ENCODE measurements at regions of chr5 and their contacts with region 1.

Region 1: DNA sequence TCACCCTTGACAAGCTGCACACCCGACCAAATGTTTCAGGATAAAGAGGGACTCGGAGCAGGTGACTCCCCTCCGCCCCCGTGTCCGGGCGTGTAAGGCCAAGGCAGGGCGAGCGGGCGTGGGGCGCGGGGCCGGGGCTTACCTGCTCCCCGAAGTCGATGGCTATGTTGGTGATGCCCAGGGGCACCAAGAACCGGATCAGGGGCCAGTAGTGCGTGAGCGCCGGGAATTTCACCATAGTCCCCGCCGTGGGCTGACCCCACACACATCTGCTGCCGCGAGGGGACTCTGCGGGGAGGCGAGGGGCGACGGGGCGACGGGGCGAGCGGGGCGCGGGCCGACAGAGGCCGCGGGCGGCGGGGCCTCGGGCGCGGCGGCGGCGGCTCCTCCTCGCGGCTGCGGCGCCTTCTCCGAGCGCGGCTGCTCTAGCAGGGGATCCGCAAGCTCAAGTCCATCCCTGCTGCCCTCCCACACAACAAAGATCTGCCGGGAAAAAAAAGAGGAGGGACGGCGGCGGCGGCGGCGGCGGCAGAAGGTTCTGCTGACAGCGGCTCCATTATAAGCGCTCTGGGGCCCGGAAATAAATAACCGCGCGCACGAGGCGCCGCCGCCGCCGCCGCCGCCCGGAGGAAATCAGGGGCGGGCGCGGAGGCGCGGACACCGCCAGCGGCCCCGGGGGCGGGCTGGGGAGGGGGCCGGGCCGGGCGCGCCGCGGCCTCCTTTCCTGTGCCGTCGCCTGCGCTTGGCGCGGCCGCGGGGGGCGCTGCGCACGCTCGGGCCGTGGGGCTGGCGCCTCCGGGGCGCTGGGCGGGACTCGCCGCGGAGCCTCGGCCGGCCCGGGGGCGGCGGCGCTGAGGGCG is at the start of gene ANKH:
- DNase-seq: peak; percentile 74 to 90 (median 85)
- ATAC-seq: peak; percentile 95
- H3K4me3 ChIP-seq: peak within 1 kb of the TSS; percentile 69
- H3K4me3 Mint-ChIP-seq: peak within 1 kb of the TSS; percentile 84 to 100 (median 96)
- H3K27ac ChIP-seq: peak within 1 kb of the TSS; percentile 87
- H3K27ac Mint-ChIP-seq: peak within 1 kb of the TSS; percentile 86 to 98 (median 95)
- H3K4me1 ChIP-seq: peaks cover 6 to 12% of the 10 kb centered on the region in 2 donors
- H3K4me1 Mint-ChIP-seq: peaks cover 19 to 54% (median 39%) of the 10 kb centered on the region in 7 donors
- H3K27me3 ChIP-seq: no peaks in the 10 kb centered on the region
- H3K27me3 Mint-ChIP-seq: peaks cover 0 to 18% (median 0%) of the 10 kb centered on the region in 5 donors
- total RNA-seq, gene ANKH: 40.6 to 190 (median 113) TPM

Region 2: DNA sequence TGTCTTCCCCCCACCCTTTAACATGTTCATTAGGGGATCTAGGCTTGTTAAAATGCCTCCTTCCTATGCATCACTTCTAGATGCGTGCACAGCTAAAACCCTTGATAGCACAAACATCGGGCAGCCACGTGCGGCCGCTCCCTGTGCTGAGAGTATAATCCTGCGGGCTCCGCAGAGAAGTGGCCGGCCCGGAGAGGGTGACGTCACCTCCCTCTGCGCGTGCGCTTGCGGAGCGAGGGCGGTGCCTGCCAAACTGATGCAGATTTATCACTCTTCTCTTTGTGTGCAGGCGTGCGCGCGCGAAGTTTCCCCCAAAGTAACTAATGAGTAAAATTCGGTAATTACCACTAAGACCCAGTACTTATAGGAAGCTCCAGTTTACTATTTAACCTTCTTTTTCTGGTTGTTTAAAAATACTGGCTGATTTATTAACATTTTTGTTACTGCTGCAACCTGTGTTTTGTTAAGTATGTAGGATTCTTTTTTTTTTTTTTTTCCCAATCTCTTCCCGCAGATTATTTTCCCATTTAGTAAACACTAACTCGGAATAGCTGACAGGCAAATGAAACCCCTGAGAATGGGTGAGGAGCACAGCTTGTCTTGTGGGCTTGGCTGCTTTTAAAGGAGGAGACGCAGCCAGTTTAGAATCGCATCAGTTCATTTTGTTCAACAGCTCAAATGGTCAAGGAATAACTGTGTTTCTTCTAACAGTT is 606.7 kb before region 1 on chr5:
- CTCF ChIA-PET with region 1: no interaction called
- POLR2A ChIA-PET with region 1: no interaction called
- intact Hi-C with region 1: loop called in 1 of 2 experiments (anchors 5 kb)
- DNase-seq: peak; percentile 30 to 78 (median 60)
- ATAC-seq: peak; percentile 93
- H3K4me3 ChIP-seq: peak overlapping the region; percentile 27
- H3K4me3 Mint-ChIP-seq: peak overlapping the region; percentile 51 to 81 (median 66)
- H3K27ac ChIP-seq: no peak overlapping the region
- H3K27ac Mint-ChIP-seq: peak overlapping the region in 1 of 9 donors; percentile 65
- H3K4me1 ChIP-seq: no peaks in the 10 kb centered on the region
- H3K4me1 Mint-ChIP-seq: peaks cover 6 to 12% (median 6%) of the 10 kb centered on the region in 7 donors
- H3K27me3 ChIP-seq: peaks cover 0 to 5% of the 10 kb centered on the region in 2 donors
- H3K27me3 Mint-ChIP-seq: peaks cover 11 to 41% (median 33%) of the 10 kb centered on the region in 5 donors

Region 3: DNA sequence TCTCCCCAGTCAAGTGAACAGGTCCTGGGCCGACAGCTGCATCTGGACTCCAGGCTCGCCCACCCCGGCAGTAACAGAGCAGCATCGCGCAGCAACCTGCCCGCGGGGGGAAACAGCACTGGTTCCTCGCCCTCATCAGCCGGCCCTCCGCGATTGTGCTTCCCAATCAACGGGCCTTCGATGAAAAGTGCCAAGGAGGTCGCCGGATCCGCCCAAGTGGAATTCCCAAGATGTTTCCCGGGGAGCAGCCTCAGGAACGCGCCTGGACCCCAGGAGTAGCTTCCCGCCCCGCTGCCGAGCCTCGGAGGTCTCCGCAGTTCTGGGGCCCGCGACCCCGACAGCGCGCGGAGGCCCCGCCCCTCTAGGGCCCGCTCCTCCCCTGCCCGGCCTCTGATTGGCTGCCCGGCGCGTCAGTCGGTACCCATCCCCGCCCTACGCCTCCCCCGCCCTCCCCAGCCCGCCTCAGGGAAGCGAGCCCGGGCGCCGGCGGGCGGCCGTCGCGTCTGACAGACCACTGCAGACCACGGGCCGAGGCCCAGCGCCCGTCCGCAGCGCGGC is 290.0 kb before region 1 on chr5 and contains the start of gene OTULINL:
- CTCF ChIA-PET with region 1: no interaction called
- POLR2A ChIA-PET with region 1: interaction called, 3 read pairs
- intact Hi-C with region 1: loop called (anchors 5 kb)
- DNase-seq: peak; percentile 72 to 90 (median 86)
- ATAC-seq: peak; percentile 92
- H3K4me3 ChIP-seq: peak within 1 kb of the TSS; percentile 82
- H3K4me3 Mint-ChIP-seq: peak within 1 kb of the TSS; percentile 83 to 91 (median 88)
- H3K27ac ChIP-seq: peak within 1 kb of the TSS; percentile 75
- H3K27ac Mint-ChIP-seq: peak within 1 kb of the TSS; percentile 78 to 96 (median 89)
- H3K4me1 ChIP-seq: peaks cover 24 to 27% of the 10 kb centered on the region in 2 donors
- H3K4me1 Mint-ChIP-seq: peaks cover 30 to 51% (median 44%) of the 10 kb centered on the region in 7 donors
- H3K27me3 ChIP-seq: no peaks in the 10 kb centered on the region
- H3K27me3 Mint-ChIP-seq: peaks cover 0 to 27% (median 0%) of the 10 kb centered on the region in 5 donors
- total RNA-seq, gene OTULINL: 26.1 to 44.7 (median 32.4) TPM

Region 4: DNA sequence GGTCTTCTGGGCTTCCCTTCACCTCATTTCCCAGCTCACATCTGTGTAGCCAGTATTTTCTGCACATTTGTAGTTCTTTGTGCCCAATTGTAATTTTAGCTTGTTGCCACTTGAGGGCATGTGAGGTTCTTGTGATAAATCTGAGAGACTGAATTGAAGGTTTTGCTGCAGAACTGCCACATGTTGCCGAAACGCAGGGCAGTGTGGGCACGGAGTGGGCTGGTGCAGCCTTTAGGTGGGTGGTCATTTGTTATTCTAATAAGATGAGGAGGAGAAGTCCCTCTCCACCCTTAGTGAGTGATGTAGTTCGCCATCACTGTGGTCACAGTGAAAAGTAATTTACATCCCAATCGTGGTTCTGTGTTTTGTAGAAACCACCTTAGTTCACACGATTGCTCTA is 185.7 kb before region 1 on chr5:
- CTCF ChIA-PET with region 1: interaction called, 9 read pairs
- POLR2A ChIA-PET with region 1: interaction called, 6 read pairs
- intact Hi-C with region 1: loop called (anchors 1 to 5 kb)
- DNase-seq: peak in 8 of 9 donors; percentile 41 to 70 (median 62)
- ATAC-seq: peak; percentile 87
- H3K4me3 ChIP-seq: peak overlapping the region; percentile 26
- H3K4me3 Mint-ChIP-seq: peak overlapping the region; percentile 49 to 85 (median 72)
- H3K27ac ChIP-seq: no peak overlapping the region
- H3K27ac Mint-ChIP-seq: peak overlapping the region; percentile 41 to 97 (median 77)
- H3K4me1 ChIP-seq: peaks cover 4% of the 10 kb centered on the region in 2 donors
- H3K4me1 Mint-ChIP-seq: peaks cover 4 to 20% (median 14%) of the 10 kb centered on the region in 7 donors
- H3K27me3 ChIP-seq: no peaks in the 10 kb centered on the region
- H3K27me3 Mint-ChIP-seq: no peaks in the 10 kb centered on the region

Region 5: GRCh38 chr5:14809369-14810155 is 61.9 kb before region 1 on chr5:
- CTCF ChIA-PET with region 1: interaction called, 7 read pairs
- POLR2A ChIA-PET with region 1: interaction called, 7 read pairs
- intact Hi-C with region 1: loop called (anchors 1 kb)
- DNase-seq: peak; percentile 16 to 74 (median 57)
- ATAC-seq: peak; percentile 94
- H3K4me3 ChIP-seq: peak overlapping the region; percentile 21
- H3K4me3 Mint-ChIP-seq: peak overlapping the region; percentile 56 to 87 (median 78)
- H3K27ac ChIP-seq: peak overlapping the region; percentile 50
- H3K27ac Mint-ChIP-seq: peak overlapping the region; percentile 72 to 93 (median 91)
- H3K4me1 ChIP-seq: peaks cover 38 to 42% of the 10 kb centered on the region in 2 donors
- H3K4me1 Mint-ChIP-seq: peaks cover 40 to 85% (median 63%) of the 10 kb centered on the region in 7 donors
- H3K27me3 ChIP-seq: no peaks in the 10 kb centered on the region
- H3K27me3 Mint-ChIP-seq: no peaks in the 10 kb centered on the region

Region 6: GRCh38 chr5:14996997-14997396 is 125.6 kb after region 1 on chr5:
- CTCF ChIA-PET with region 1: interaction called, 4 read pairs
- POLR2A ChIA-PET with region 1: interaction called, 5 read pairs
- intact Hi-C with region 1: loop called (anchors 1 to 2 kb)
- DNase-seq: no peak
- ATAC-seq: peak; percentile 29
- H3K4me3 ChIP-seq: no peak overlapping the region
- H3K4me3 Mint-ChIP-seq: no peak overlapping the region
- H3K27ac ChIP-seq: no peak overlapping the region
- H3K27ac Mint-ChIP-seq: no peak overlapping the region
- H3K4me1 ChIP-seq: peaks cover 5% of the 10 kb centered on the region in 2 donors
- H3K4me1 Mint-ChIP-seq: peaks cover 6 to 33% (median 12%) of the 10 kb centered on the region in 7 donors
- H3K27me3 ChIP-seq: no peaks in the 10 kb centered on the region
- H3K27me3 Mint-ChIP-seq: peaks cover 0 to 18% (median 0%) of the 10 kb centered on the region in 5 donors

Region 7: GRCh38 chr5:16616536-16617273 is 1745.3 kb after region 1 on chr5 and contains the start of gene RETREG1:
- CTCF ChIA-PET with region 1: no interaction called
- POLR2A ChIA-PET with region 1: no interaction called
- intact Hi-C with region 1: loop called in 1 of 2 experiments (anchors 2 kb)
- DNase-seq: peak; percentile 84 to 92 (median 91)
- ATAC-seq: peak; percentile 93
- H3K4me3 ChIP-seq: peak within 1 kb of the TSS; percentile 79
- H3K4me3 Mint-ChIP-seq: peak within 1 kb of the TSS in 6 of 10 donors; percentile 96 to 99 (median 98)
- H3K27ac ChIP-seq: peak within 1 kb of the TSS; percentile 98
- H3K27ac Mint-ChIP-seq: peak within 1 kb of the TSS in 7 of 9 donors; percentile 92 to 99 (median 99)
- H3K4me1 ChIP-seq: peaks cover 10 to 32% of the 10 kb centered on the region in 2 donors
- H3K4me1 Mint-ChIP-seq: peaks cover 32 to 52% (median 44%) of the 10 kb centered on the region in 7 donors
- H3K27me3 ChIP-seq: no peaks in the 10 kb centered on the region
- H3K27me3 Mint-ChIP-seq: no peaks in the 10 kb centered on the region
- total RNA-seq, gene RETREG1: 37.4 to 78.3 (median 47.4) TPM

Measured in naive thymus-derived CD4-positive, alpha-beta T cell (primary cell).